Calu3 (cell line): ENCODE measurements at regions of chr9 and their contacts with region 1.

Region 1: GRCh38 chr9:96619491-96620154 is at the start of gene CDC14B:
- DNase-seq: peak; percentile 92
- H3K4me3 Mint-ChIP-seq: peak within 1 kb of the TSS; percentile 76
- H3K27ac Mint-ChIP-seq: peak within 1 kb of the TSS; percentile 85
- H3K4me1 Mint-ChIP-seq: peaks cover 26% of the 10 kb centered on the region
- H3K27me3 Mint-ChIP-seq: no peaks in the 10 kb centered on the region
- CTCF ChIP-seq: no peak
- total RNA-seq, gene CDC14B: 26.4 and 29.8 TPM in 2 replicates

Region 2: DNA sequence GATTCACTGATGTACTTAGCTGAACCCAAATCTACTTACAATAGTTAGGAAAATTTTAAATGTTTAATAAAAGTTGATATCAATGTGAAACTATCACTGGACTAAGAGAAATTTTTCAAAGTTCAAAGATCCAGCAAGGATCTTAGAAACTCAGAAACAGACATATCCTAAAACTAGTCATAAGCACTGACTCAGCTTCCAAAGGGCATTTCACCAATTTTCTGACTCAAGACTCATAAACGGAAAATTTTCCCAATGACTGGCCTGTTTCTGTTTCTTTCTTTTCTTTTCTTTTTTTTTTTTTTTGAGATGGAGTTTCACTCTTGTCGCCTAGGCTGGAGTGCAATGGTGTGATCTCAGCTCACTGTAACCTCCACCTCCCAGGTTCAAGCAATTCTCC is 66.6 kb before region 1 on chr9:
- CTCF ChIA-PET with region 1: no interaction called
- intact Hi-C with region 1: no loop called
- DNase-seq: no peak
- H3K4me3 Mint-ChIP-seq: no peak overlapping the region
- H3K27ac Mint-ChIP-seq: no peak overlapping the region
- H3K4me1 Mint-ChIP-seq: no peaks in the 10 kb centered on the region
- H3K27me3 Mint-ChIP-seq: no peaks in the 10 kb centered on the region
- CTCF ChIP-seq: no peak

Region 3: DNA sequence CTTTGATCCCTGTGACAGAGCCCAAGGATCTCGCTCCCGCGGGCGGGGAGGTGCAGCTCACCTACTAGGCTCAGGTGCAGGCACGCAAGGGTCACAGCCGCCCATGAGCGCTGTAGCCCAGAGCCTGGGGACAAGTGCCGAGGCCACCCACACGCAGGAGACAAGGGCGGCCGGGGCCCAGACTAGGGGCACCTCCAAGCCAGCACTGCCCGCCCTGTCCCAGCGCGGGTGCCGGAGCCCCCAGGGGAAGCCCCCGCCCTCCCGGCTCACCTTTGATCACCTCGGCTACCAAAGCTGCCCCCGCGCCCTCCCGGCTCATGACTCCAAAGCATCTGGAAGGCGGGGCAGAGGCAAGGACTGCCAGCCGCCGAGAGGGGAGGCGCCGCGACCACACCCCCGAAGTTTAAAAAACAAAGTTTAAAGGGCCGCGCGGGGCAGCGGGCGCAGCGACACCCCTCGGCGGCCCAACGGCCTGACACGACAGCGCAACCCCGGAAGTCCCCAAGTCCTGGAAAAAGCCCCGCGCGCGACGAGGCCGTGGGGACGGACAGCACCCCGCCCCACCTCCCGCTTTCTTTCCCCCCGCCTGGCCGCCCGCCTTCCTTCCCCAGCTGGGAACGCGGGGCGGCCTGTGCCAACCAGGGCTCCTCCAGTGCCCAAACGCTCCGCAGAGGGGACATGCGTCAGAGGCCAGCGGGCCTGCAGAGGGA is 53.0 kb before region 1 on chr9:
- CTCF ChIA-PET with region 1: no interaction called
- intact Hi-C with region 1: loop called (anchors 10 kb)
- DNase-seq: peak; percentile 70
- H3K4me3 Mint-ChIP-seq: peak overlapping the region; percentile 80
- H3K27ac Mint-ChIP-seq: no peak overlapping the region
- H3K4me1 Mint-ChIP-seq: peaks cover 8% of the 10 kb centered on the region
- H3K27me3 Mint-ChIP-seq: no peaks in the 10 kb centered on the region
- CTCF ChIP-seq: peak; percentile 26